Right cardiac atrium (tissue), 5 donors: ENCODE measurements at regions of chr3 and their contacts with region 1.

Region 1: DNA sequence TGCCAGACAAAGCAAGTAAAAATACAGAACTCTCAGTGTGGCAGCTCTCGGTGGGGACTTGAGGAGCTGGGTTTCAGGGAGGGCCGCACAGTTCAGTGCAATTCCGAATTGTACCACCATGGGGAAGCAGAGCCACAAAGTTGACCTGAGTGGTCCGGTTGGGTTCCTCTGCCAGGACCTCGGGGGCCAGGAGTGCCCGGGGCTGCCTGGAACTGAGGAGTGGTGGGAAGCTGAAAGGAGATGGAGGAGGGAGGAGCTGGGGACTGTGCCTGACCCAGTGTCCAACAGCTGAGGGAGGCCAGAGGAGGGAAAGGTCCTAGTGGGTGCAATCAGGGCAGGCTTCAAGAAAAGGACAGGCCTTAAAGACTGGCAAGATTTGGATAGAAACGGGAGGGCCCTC is 32.2 kb upstream of the TRH start:
- DNase-seq: peak; percentile 58 to 78 (median 75)
- ATAC-seq: peak; percentile 88 to 90
- H3K4me3 ChIP-seq: no peak overlapping the region
- H3K27ac ChIP-seq: no peak overlapping the region
- H3K4me1 ChIP-seq: no peaks in the 10 kb centered on the region
- H3K27me3 ChIP-seq: no peaks in the 10 kb centered on the region

Region 2: GRCh38 chr3:129424185-129424841 is 518.0 kb before region 1 on chr3:
- intact Hi-C with region 1: no loop called
- DNase-seq: no peak
- ATAC-seq: no peak
- H3K4me3 ChIP-seq: no peak overlapping the region
- H3K27ac ChIP-seq: no peak overlapping the region
- H3K4me1 ChIP-seq: peaks cover 2% of the 10 kb centered on the region
- H3K27me3 ChIP-seq: no peaks in the 10 kb centered on the region

Region 3: GRCh38 chr3:129893581-129894070 is 48.7 kb before region 1 on chr3 and contains the start of gene TMCC1:
- intact Hi-C with region 1: no loop called
- DNase-seq: peak; percentile 86 to 94 (median 94)
- ATAC-seq: peak; percentile 96 to 98
- H3K4me3 ChIP-seq: peak within 1 kb of the TSS; percentile 63
- H3K27ac ChIP-seq: peak within 1 kb of the TSS; percentile 76
- H3K4me1 ChIP-seq: peaks cover 6% of the 10 kb centered on the region
- H3K27me3 ChIP-seq: no peaks in the 10 kb centered on the region
- total RNA-seq, gene TMCC1: 40.1 to 45.0 (median 43.9) TPM

Region 4: GRCh38 chr3:129994883-129995559 is 52.7 kb after region 1 on chr3:
- intact Hi-C with region 1: loop called in 2 of 4 experiments (anchors 5 kb)
- DNase-seq: no peak
- ATAC-seq: no peak
- H3K4me3 ChIP-seq: no peak overlapping the region
- H3K27ac ChIP-seq: no peak overlapping the region
- H3K4me1 ChIP-seq: no peaks in the 10 kb centered on the region
- H3K27me3 ChIP-seq: no peaks in the 10 kb centered on the region

Region 5: DNA sequence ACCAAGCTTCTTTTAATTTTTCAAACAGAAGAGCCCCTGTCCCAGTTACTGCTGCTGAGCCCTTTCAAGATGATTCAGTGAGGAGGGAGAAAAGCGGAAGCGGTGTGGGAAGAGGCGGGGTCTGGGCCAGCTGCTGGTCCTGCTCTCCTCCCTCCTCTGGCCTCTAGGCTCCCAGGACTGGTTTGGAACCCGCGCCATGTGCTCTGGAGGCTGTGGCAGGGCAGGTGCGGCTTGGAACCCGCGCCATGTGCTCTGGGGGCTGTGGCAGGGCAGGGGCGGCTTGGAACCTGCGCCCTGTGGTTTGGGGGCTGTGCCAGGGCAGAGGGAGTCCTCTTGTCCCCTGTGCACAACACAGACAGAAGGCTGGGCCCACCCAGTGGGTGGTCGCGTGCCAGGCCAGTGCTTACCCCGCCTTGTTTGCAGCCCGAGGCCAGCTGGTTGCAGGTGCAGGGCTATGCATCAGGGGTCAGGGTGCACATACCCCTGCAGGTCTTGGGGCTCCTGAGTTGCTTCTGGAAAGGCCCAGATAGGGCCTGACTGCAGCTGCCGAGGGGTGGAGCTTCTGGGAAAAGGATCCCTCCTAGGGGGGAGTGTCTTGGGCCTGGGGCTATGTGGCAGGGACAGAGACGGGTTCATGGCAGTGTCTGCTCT is 151.6 kb after region 1 on chr3:
- intact Hi-C with region 1: loop called in 2 of 4 experiments (anchors 5 to 10 kb)
- DNase-seq: peak in 1 of 3 donors; percentile 55
- ATAC-seq: no peak
- H3K4me3 ChIP-seq: no peak overlapping the region
- H3K27ac ChIP-seq: no peak overlapping the region
- H3K4me1 ChIP-seq: no peaks in the 10 kb centered on the region
- H3K27me3 ChIP-seq: no peaks in the 10 kb centered on the region